ENCODE measurements at regions of chr2 and their contacts with region 1.

Region 1: DNA sequence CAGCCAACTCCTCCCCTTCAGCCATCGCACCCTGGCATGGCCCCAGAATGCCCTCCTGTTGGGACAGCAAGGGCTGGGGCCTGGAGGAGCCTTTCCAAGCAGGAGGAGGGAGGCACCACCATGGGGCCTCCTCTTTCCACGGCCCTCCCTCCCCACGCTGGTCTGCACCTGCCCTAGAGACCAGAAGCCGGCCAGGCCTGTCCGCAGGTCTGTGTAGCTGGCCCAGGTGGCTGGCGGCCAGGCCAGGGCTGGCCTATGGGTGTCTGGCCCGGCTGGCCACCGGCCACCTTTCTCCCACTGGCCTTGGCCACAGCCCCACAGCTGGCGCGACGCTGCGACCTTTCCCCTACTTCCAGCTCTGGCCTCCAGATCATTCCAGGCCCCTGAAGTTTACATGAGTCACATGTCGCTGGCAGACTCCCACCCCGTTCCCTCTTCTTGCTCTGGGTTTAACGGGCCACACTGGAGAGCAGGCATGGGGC is 33.5 kb upstream of the KLF11 start:
- DNase-seq: peak; percentile 93
- ATAC-seq: peak; percentile 87

Region 2: GRCh38 chr2:9984217-9984739 is 25.6 kb before region 1 on chr2:
- intact Hi-C with region 1: loop called (anchors 2 kb)
- DNase-seq: no peak
- ATAC-seq: peak; percentile 62

Region 3: DNA sequence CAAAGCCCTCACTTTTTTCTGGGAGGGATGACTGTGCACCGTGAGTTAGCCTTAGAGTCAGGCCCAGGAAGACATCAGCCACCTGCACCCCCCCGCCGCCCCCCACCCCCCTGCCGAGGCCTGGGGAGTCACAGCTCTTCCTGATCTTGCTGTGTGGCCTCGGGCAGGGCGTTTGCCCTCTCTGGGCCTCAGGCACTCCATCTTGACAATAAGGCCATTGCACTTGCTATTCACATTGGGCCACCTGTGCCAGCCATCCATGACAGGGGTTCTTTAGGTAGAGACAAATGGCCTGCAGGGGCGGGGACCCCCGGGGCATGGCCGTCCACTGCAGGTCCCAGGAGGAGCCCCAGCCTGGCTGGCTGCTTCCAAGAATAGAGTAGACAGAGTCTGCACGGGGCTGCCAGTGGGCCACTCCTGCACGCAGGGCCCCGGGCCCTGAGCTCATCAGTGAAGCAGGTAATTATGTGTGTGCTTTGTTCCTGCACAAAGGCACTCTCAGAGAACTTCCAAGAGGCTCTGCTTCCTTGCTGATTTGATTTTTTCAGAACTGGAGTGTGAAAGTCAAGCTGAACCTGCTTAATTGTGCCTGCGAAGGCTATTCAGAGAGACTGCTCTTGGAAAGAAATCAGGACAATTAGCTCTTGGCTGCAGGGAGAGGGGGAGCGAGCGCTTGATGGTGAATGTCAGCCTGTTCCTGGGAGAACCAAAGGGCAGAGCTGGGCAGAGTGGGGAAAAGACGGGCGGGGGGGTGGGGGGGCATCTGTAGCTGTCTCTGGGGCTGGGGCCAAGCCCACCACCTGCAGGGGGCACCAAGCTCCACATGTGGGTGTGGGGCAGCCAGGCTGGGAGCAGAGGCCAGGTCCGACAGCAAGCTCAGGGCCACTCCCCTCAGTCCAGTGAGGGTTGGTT is 153.0 kb after region 1 on chr2:
- intact Hi-C with region 1: no loop called
- DNase-seq: peak; percentile 66
- ATAC-seq: peak; percentile 46